Body of pancreas (tissue), 4 donors: ENCODE measurements at regions of chr17 and their contacts with region 1.

Region 1: GRCh38 chr17:37752482-37752881 is 7.6 kb upstream of the HNF1B start:
- DNase-seq: peak in 1 of 4 donors; percentile 26
- ATAC-seq: no peak
- H3K4me3 ChIP-seq: no peak overlapping the region
- H3K27ac ChIP-seq: peak overlapping the region in 2 of 4 donors; percentile 16 to 20
- H3K4me1 ChIP-seq: peaks cover 50% of the 10 kb centered on the region
- H3K27me3 ChIP-seq: no peaks in the 10 kb centered on the region
- CTCF ChIP-seq: no peak
- POLR2A ChIP-seq: no peak

Region 2: GRCh38 chr17:37701496-37701898 is 51.0 kb before region 1 on chr17:
- intact Hi-C with region 1: loop called (anchors 10 kb)
- DNase-seq: peak; percentile 58 to 77 (median 69)
- ATAC-seq: peak; percentile 62
- H3K4me3 ChIP-seq: no peak overlapping the region
- H3K27ac ChIP-seq: peak overlapping the region in 3 of 4 donors; percentile 13 to 39 (median 38)
- H3K4me1 ChIP-seq: peaks cover 34% of the 10 kb centered on the region
- H3K27me3 ChIP-seq: no peaks in the 10 kb centered on the region
- CTCF ChIP-seq: peak; percentile 62 to 86 (median 77)
- POLR2A ChIP-seq: no peak

Region 3: GRCh38 chr17:37802712-37803416 is 50.4 kb after region 1 on chr17:
- intact Hi-C with region 1: no loop called
- DNase-seq: peak in 3 of 4 donors; percentile 17 to 55 (median 42)
- ATAC-seq: peak; percentile 75
- H3K4me3 ChIP-seq: no peak overlapping the region
- H3K27ac ChIP-seq: peak overlapping the region in 1 of 4 donors; percentile 19
- H3K4me1 ChIP-seq: no peaks in the 10 kb centered on the region
- H3K27me3 ChIP-seq: no peaks in the 10 kb centered on the region
- CTCF ChIP-seq: no peak
- POLR2A ChIP-seq: no peak

Region 4: DNA sequence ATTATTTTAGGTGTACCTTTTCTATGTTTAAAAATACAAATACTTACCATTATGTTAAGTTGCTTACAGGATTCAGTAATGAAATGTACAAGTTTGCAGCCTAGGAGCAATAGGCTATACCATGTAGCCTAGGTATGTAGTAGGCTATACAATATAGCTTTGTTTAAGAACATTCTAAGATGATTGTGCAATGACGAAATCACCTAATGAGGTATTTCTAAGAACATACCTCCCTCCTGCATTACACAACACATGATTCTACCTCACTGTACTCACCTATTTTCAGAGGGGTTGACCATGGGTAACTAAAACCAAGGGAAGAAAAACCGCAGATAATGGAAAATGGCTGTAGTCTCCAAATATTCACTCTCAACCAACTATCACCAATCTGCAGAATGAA is 136.4 kb after region 1 on chr17:
- intact Hi-C with region 1: no loop called
- DNase-seq: no peak
- ATAC-seq: no peak
- H3K4me3 ChIP-seq: no peak overlapping the region
- H3K27ac ChIP-seq: no peak overlapping the region
- H3K4me1 ChIP-seq: no peaks in the 10 kb centered on the region
- H3K27me3 ChIP-seq: no peaks in the 10 kb centered on the region
- CTCF ChIP-seq: no peak
- POLR2A ChIP-seq: no peak